Mammary epithelial cell (primary cell): ENCODE measurements at regions of chr3 and their contacts with region 1.

Region 1: DNA sequence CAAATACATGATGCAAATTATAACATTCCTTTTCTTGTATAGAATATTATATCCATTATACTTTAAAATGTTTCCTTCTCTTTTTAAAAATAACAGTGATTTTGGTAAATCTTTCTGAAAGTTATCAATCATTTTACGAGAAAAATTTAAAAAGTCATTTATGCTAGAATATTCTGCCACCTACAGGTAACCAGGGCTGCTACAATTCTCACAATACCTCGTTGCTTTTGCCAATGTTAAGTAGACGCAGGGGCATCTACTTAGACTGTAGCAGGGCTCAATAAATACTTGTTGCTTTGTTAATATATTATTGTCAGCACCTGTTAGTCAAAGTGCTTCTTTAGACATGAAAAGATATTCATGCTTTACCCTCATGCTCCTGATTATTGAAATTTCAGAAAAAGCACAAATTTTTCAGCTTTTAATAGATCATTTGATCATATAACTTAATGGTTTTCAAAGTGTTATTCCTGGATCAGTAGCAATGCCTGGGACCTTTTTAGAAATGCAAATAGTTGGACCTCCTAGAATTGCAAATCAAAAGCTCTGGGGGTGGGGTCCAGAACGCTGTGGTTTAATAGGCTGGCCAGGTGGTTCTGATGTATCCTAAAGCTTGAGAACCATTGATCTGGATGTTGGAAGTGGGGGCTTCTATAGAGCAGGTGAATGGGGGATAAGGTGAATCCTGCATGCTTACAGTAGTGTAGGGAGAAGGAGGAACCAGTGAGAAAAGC is 223.6 kb upstream of the PDZRN3 start:
- DNase-seq: peak; percentile 13
- H3K4me3 ChIP-seq: no peak overlapping the region
- H3K27ac ChIP-seq: no peak overlapping the region
- H3K4me1 ChIP-seq: no peaks in the 10 kb centered on the region
- H3K27me3 ChIP-seq: no peaks in the 10 kb centered on the region
- CTCF ChIP-seq: peak; percentile 77 to 82

Region 2: GRCh38 chr3:73100741-73101559 is 747.4 kb before region 1 on chr3:
- CTCF ChIA-PET with region 1: no interaction called
- dilution Hi-C with region 1: no loop called
- in situ Hi-C with region 1: loop called in 1 of 2 experiments (anchors 25 kb)
- intact Hi-C with region 1: loop called (anchors 5 kb)
- DNase-seq: peak; percentile 61
- H3K4me3 ChIP-seq: no peak overlapping the region
- H3K27ac ChIP-seq: no peak overlapping the region
- H3K4me1 ChIP-seq: no peaks in the 10 kb centered on the region
- H3K27me3 ChIP-seq: no peaks in the 10 kb centered on the region
- CTCF ChIP-seq: peak; percentile 94 to 95

Region 3: DNA sequence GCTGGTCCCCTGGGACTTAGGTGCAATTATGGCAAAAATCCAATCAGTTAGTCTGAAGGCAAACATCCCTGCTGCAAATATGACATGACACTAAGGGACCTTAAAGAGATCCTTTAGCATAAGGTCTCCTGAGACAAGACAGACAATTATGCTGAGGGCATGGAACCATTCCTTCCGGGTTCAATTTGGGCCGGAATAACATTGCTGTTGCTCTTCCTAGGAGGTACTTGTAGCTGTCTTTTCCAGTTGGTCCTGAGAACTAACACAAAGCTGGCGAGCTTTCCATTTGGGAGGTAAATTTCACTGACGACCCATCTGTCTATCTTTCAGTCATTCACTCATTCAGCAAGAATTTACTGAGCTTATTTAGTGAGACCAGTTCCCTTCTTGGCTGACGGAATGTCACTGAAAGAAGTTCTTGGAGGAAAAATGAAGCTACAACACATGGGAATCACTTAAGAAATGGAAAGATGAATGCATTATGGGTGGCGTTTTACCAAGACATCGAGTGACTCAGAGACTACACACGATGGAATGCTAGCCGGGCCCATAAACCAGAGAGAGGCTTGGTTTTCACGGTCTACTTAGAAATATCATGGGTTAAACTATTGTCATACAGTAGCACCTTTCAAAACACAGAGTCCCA is 439.1 kb before region 1 on chr3:
- CTCF ChIA-PET with region 1: no interaction called
- dilution Hi-C with region 1: no loop called
- in situ Hi-C with region 1: no loop called
- intact Hi-C with region 1: no loop called
- DNase-seq: no peak
- H3K4me3 ChIP-seq: no peak overlapping the region
- H3K27ac ChIP-seq: no peak overlapping the region
- H3K4me1 ChIP-seq: no peaks in the 10 kb centered on the region
- H3K27me3 ChIP-seq: no peaks in the 10 kb centered on the region
- CTCF ChIP-seq: no peak

Region 4: GRCh38 chr3:73508330-73508954 is 339.9 kb before region 1 on chr3:
- CTCF ChIA-PET with region 1: interaction called, 5 read pairs
- dilution Hi-C with region 1: no loop called
- in situ Hi-C with region 1: loop called (anchors 5 to 10 kb)
- intact Hi-C with region 1: loop called (anchors 1 kb)
- DNase-seq: peak; percentile 45
- H3K4me3 ChIP-seq: no peak overlapping the region
- H3K27ac ChIP-seq: no peak overlapping the region
- H3K4me1 ChIP-seq: no peaks in the 10 kb centered on the region
- H3K27me3 ChIP-seq: no peaks in the 10 kb centered on the region
- CTCF ChIP-seq: peak; percentile 73 to 77

Region 5: DNA sequence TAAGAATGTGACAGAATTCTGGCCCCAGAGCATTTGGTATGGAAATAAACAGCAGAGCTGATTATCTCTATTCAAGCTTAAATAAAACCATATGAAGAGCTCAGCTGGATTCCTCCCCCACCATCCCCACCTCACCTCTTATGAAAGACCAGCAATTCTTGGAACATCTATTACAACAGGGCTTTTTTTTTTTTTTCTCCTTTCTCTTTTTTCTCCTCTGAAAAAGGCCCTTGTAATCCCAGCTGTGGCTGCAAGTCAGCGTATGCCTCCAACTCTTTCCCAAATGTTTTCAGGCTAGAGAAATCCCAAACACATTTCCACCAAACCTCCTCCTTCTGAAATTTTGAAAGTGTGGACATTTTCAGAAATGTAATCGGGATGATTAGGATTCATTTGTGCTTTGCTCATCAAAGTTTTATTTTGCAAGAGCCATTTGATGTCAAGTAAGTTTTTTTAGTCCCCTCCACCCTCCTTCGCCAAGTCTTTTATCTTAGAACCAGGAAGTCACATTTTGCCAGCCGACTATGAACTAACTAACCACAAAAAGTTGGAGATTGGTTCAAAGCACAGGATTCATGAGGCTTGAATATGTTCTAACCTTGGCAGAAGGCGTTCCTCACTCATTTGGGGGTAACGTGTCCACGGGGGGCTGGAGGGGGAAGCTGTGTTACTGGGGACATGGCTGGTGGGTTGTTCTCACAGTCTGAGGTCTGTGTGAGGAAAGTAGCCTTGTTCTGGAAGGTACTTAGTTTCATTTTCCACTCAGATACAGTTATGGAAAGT is 81.5 kb before region 1 on chr3:
- CTCF ChIA-PET with region 1: no interaction called
- dilution Hi-C with region 1: no loop called
- in situ Hi-C with region 1: no loop called
- intact Hi-C with region 1: loop called (anchors 5 kb)
- DNase-seq: no peak
- H3K4me3 ChIP-seq: peak overlapping the region in 2 of 3 experiments; percentile 2 to 12
- H3K27ac ChIP-seq: no peak overlapping the region
- H3K4me1 ChIP-seq: peaks cover 4% of the 10 kb centered on the region
- H3K27me3 ChIP-seq: no peaks in the 10 kb centered on the region
- CTCF ChIP-seq: no peak

Region 6: DNA sequence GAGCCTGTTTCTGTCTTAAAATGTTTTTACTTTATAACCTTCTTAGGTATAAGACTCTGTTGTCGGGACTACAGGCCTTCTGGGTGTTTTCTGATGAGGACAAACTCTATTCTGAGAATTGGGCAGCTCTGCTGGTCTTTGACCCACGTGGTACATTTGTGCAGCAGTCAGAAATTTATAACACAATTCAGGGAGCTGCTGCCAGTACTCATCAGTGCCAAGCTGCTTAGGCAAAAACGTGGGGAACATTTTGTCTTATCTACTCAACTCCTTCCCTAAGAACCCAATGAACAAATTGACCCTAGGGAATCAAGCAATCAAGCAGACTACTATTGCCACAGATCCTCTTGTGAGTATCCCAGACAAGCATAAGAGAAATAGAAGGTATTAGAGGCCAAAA is 42.9 kb before region 1 on chr3:
- CTCF ChIA-PET with region 1: no interaction called
- dilution Hi-C with region 1: no loop called
- in situ Hi-C with region 1: no loop called
- intact Hi-C with region 1: loop called (anchors 5 kb)
- DNase-seq: no peak
- H3K4me3 ChIP-seq: no peak overlapping the region
- H3K27ac ChIP-seq: no peak overlapping the region
- H3K4me1 ChIP-seq: peaks cover 21% of the 10 kb centered on the region
- H3K27me3 ChIP-seq: no peaks in the 10 kb centered on the region
- CTCF ChIP-seq: no peak

Region 7: DNA sequence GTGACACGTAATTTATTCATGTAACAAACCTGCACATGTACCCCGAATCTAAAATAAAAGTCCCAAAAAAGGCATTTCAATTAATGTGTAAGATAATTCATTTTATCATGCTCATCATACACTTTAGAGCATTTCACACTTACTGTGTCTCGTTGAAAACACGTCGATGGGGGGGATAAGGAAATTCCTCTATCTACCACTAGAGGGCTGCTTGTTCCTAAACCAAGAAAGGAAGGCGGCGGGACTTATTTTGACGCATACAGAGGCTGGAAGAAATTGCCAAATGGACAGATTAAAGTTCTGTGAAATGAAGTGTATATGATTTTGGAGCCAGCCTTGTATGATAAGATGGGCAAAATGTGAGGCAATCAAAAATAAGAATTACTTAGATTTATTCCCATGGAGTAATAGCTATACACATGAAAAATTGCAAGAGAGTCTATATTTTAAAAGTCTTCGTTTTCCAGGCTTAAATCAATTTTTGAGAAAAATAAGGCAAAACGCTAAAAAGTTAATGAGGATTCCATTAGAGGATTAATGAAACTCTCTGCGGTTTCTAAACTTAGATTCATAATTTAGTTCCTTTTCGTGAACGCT is 419.3 kb after region 1 on chr3:
- CTCF ChIA-PET with region 1: no interaction called
- dilution Hi-C with region 1: no loop called
- in situ Hi-C with region 1: no loop called
- intact Hi-C with region 1: no loop called
- DNase-seq: peak; percentile 46
- H3K4me3 ChIP-seq: no peak overlapping the region
- H3K27ac ChIP-seq: no peak overlapping the region
- H3K4me1 ChIP-seq: peaks cover 16% of the 10 kb centered on the region
- H3K27me3 ChIP-seq: no peaks in the 10 kb centered on the region
- CTCF ChIP-seq: peak; percentile 77 to 84